Heart right ventricle (tissue), 16 donors: ENCODE measurements at regions of chr10 and their contacts with region 1.

Region 1: DNA sequence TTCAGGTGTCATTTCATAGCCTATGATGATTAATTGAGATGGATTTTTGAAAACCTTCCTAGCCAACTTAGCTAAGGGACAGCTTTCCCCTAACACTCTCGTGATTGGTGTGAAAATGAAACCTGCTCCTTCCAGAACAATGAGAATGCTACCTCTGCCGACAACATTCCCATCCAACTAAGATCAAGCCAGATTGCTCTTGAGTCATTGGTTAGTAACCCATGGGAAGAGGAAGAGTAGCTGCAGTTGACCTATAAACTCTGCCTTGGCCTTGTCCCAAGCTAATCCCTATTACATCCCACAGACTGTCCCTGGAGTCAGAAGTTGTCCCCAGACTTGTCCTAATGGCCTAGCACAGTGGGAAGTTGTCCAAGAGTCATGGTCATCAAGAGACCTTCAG is 80.5 kb upstream of the SVIL start:
- DNase-seq: no peak
- ATAC-seq: no peak
- H3K4me3 ChIP-seq: no peak overlapping the region
- H3K27ac ChIP-seq: no peak overlapping the region
- H3K4me1 ChIP-seq: peaks cover 0 to 29% (median 6%) of the 10 kb centered on the region in 9 donors
- H3K27me3 ChIP-seq: no peaks in the 10 kb centered on the region
- CTCF ChIP-seq: no peak

Region 2: DNA sequence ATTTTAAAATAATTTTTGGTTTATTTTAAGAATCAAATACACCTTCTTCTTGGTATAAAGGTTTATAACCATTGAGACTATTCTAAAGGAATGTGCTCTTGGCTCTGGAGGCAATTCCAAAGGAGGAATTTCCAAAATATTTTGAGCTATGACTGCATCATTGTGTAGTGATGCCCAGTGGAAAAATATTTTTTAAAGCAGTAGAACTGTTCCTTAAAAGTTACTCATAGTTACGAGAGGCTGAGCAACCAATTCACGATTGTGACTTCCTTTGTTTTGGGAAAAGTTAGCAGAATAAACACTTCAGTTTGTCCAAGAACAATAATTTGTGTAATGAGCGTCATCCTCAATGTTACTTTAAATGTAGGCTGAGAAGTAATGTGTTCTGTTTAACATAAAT is 804.3 kb before region 1 on chr10:
- intact Hi-C with region 1: no loop called
- DNase-seq: no peak
- ATAC-seq: peak in 5 of 8 donors; percentile 39 to 70 (median 67)
- H3K4me3 ChIP-seq: no peak overlapping the region
- H3K27ac ChIP-seq: no peak overlapping the region
- H3K4me1 ChIP-seq: peaks cover 0 to 6% (median 0%) of the 10 kb centered on the region in 9 donors
- H3K27me3 ChIP-seq: no peaks in the 10 kb centered on the region
- CTCF ChIP-seq: no peak

Region 3: GRCh38 chr10:30639946-30640786 is 924.9 kb after region 1 on chr10:
- intact Hi-C with region 1: loop called in 1 of 10 experiments (anchors 5 kb)
- DNase-seq: no peak
- ATAC-seq: peak in 3 of 8 donors; percentile 14 to 53 (median 32)
- H3K4me3 ChIP-seq: no peak overlapping the region
- H3K27ac ChIP-seq: peak overlapping the region in 1 of 10 donors; percentile 27
- H3K4me1 ChIP-seq: peaks cover 0 to 42% (median 21%) of the 10 kb centered on the region in 9 donors
- H3K27me3 ChIP-seq: peaks cover 0 to 4% (median 0%) of the 10 kb centered on the region in 7 donors
- CTCF ChIP-seq: peak; percentile 81 to 93 (median 87)